ENCODE measurements at regions of chr1 and their contacts with region 1.

Region 1: DNA sequence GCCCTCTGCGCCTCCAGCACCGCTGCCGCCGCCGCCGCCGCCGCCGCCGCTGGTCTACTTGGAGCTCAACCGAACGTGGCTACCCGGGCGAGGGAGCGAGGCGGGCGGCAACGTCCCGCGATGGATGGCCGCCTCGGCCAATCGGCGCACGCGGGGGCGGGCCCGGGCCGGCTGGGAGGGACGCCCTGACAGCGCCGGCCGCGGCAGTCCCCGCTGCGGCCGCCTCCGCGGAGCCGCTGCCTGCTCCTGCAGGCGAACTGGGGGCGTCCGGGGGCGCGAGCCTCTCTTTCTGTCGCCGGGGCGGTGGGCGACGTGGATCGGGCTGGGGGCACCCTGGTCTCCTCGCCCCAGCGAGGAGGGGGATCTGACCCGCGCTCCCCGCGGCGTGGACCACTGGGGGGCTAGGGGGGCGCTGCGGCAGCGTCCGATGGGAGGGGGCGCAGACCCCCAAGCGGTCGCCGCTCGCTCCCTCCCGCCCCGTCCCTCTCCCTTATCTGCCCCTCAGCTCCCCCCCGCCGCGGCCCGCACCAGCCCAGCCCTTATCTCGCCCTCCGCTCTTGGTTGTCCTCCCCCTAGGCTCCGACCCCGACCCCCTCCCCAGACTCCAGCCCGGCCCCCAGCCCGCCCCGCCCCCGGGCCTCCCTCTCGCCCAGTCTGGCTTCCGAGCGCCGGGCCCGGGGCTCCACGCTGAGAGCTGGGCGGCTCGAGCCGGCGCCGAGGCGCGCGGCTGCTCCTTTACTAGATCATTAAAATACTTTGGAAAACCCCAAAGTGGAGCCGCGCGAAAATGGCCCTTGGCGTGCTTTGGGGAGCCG is at the start of gene SSBP3:
- DNase-seq: peak; percentile 79 to 96 (median 92)
- ATAC-seq: peak; percentile 90
- H3K4me3 ChIP-seq: peak within 1 kb of the TSS; percentile 81 to 88
- H3K4me3 Mint-ChIP-seq: peak within 1 kb of the TSS; percentile 96
- H3K27ac ChIP-seq: peak within 1 kb of the TSS; percentile 55 to 76
- H3K27ac Mint-ChIP-seq: peak within 1 kb of the TSS; percentile 91
- H3K4me1 ChIP-seq: peaks cover 57% of the 10 kb centered on the region
- H3K4me1 Mint-ChIP-seq: peaks cover 64% of the 10 kb centered on the region
- H3K27me3 ChIP-seq: no peaks in the 10 kb centered on the region
- H3K27me3 Mint-ChIP-seq: no peaks in the 10 kb centered on the region
- CTCF ChIP-seq: no peak
- total RNA-seq, gene SSBP3: 41.5 to 47.7 TPM

Region 2: GRCh38 chr1:53326088-53326597 is 1080.4 kb before region 1 on chr1:
- CTCF ChIA-PET with region 1: no interaction called
- POLR2A ChIA-PET with region 1: no interaction called
- intact Hi-C with region 1: loop called in 1 of 2 experiments (anchors 5 kb)
- DNase-seq: peak; percentile 78 to 94 (median 92)
- ATAC-seq: peak; percentile 89
- H3K4me3 ChIP-seq: peak overlapping the region; percentile 74 to 82
- H3K4me3 Mint-ChIP-seq: peak overlapping the region; percentile 94
- H3K27ac ChIP-seq: peak overlapping the region; percentile 26 to 66
- H3K27ac Mint-ChIP-seq: peak overlapping the region; percentile 77
- H3K4me1 ChIP-seq: peaks cover 6% of the 10 kb centered on the region
- H3K4me1 Mint-ChIP-seq: peaks cover 16% of the 10 kb centered on the region
- H3K27me3 ChIP-seq: no peaks in the 10 kb centered on the region
- H3K27me3 Mint-ChIP-seq: no peaks in the 10 kb centered on the region
- CTCF ChIP-seq: no peak

Region 3: GRCh38 chr1:53945433-53946251 is 460.9 kb before region 1 on chr1 and contains the start of gene IFT25:
- CTCF ChIA-PET with region 1: no interaction called
- POLR2A ChIA-PET with region 1: no interaction called
- intact Hi-C with region 1: loop called in 1 of 2 experiments (anchors 2 kb)
- DNase-seq: peak; percentile 96 to 100 (median 98)
- ATAC-seq: peak; percentile 81
- H3K4me3 ChIP-seq: peak within 1 kb of the TSS; percentile 81 to 94
- H3K4me3 Mint-ChIP-seq: peak within 1 kb of the TSS; percentile 98
- H3K27ac ChIP-seq: peak within 1 kb of the TSS; percentile 58 to 88
- H3K27ac Mint-ChIP-seq: peak within 1 kb of the TSS; percentile 96
- H3K4me1 ChIP-seq: peaks cover 27% of the 10 kb centered on the region
- H3K4me1 Mint-ChIP-seq: peaks cover 57% of the 10 kb centered on the region
- H3K27me3 ChIP-seq: no peaks in the 10 kb centered on the region
- H3K27me3 Mint-ChIP-seq: no peaks in the 10 kb centered on the region
- CTCF ChIP-seq: no peak
- total RNA-seq, gene IFT25: 12.8 to 13.1 TPM

Region 4: DNA sequence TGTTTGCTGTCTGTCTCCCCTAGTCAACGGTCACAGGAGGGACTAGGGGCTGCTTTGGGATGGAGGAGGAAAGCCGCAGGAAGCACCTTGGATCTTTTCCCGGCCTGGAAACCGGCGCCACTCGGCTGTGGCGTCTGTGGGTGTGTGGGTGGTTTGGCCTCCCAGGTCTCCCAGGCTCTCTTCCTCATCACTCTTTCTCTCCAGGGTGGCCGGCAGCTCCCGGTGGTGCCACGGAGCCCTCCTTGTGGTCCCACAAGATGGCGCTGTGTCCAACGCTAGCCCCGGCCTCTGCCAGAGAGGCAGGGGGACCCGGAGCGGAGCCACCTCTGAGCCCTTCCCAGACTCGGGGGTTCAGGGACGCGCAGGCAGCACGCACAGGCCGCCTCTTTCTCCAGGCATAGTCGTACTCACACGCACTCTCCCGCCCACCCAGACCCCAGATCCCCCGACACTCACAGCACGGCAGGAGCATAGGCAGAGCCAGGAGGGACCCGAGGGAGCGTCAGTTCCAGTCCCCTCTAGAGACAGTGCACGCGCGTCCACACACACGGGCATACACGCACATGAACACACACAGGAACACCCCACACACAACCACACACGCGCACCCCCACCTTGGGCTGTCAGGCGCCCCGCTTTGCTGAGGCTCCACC is 284.9 kb before region 1 on chr1:
- CTCF ChIA-PET with region 1: interaction called, 3 read pairs
- POLR2A ChIA-PET with region 1: interaction called, 3 read pairs
- intact Hi-C with region 1: loop called (anchors 1 to 5 kb)
- DNase-seq: peak; percentile 41 to 81 (median 70)
- ATAC-seq: peak; percentile 94
- H3K4me3 ChIP-seq: no peak overlapping the region
- H3K4me3 Mint-ChIP-seq: peak overlapping the region; percentile 59
- H3K27ac ChIP-seq: no peak overlapping the region
- H3K27ac Mint-ChIP-seq: no peak overlapping the region
- H3K4me1 ChIP-seq: peaks cover 5% of the 10 kb centered on the region
- H3K4me1 Mint-ChIP-seq: peaks cover 6% of the 10 kb centered on the region
- H3K27me3 ChIP-seq: peaks cover 0 to 11% of the 10 kb centered on the region in 2 experiments
- H3K27me3 Mint-ChIP-seq: peaks cover 3% of the 10 kb centered on the region
- CTCF ChIP-seq: peak; percentile 53

Region 5: GRCh38 chr1:54287176-54287650 is 119.3 kb before region 1 on chr1:
- CTCF ChIA-PET with region 1: no interaction called
- POLR2A ChIA-PET with region 1: interaction called, 3 read pairs
- intact Hi-C with region 1: loop called (anchors 2 kb)
- DNase-seq: peak; percentile 12 to 87 (median 71)
- ATAC-seq: peak; percentile 78
- H3K4me3 ChIP-seq: peak overlapping the region in 1 of 2 experiments; percentile 57
- H3K4me3 Mint-ChIP-seq: peak overlapping the region; percentile 78
- H3K27ac ChIP-seq: peak overlapping the region; percentile 61 to 71
- H3K27ac Mint-ChIP-seq: peak overlapping the region; percentile 99
- H3K4me1 ChIP-seq: peaks cover 96% of the 10 kb centered on the region
- H3K4me1 Mint-ChIP-seq: peaks cover 90% of the 10 kb centered on the region
- H3K27me3 ChIP-seq: no peaks in the 10 kb centered on the region
- H3K27me3 Mint-ChIP-seq: no peaks in the 10 kb centered on the region
- CTCF ChIP-seq: no peak

Region 6: DNA sequence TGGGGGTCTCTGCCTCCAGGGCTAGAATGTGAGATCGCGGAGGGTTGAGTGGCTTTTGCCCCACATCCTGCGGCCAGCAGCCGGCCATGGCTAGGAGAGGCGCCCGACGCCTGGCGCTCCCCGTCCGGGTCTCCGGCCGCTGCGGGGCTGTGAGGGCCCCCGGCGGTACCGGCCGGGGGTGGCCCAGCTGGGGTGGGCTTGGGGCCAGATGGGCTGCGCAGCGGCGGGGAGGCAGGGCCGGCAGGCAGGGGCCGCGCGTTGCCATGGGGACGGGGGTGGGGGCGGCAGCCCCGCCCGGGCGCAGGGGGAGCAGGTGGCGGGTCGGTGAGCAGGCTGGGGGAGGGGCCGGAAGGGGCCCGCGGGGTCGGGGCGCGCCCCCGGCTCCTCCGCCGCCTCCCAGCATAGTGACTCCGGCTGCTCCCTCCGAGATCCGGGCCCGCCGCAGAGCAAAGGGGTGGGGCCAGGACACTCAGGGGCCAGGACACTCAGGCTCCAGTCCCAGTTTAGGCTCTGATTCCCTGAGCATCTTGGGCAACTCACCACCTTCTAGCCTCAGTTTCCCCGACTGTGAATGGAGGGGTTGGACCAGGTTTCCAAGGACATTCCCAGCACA is 68.2 kb after region 1 on chr1:
- CTCF ChIA-PET with region 1: interaction called, 4 read pairs
- POLR2A ChIA-PET with region 1: interaction called, 4 read pairs
- intact Hi-C with region 1: loop called in 1 of 2 experiments (anchors 1 kb)
- DNase-seq: peak in 5 of 9 experiments; percentile 42 to 67 (median 57)
- ATAC-seq: peak; percentile 56
- H3K4me3 ChIP-seq: peak overlapping the region; percentile 42 to 46
- H3K4me3 Mint-ChIP-seq: peak overlapping the region; percentile 88
- H3K27ac ChIP-seq: peak overlapping the region in 1 of 2 experiments; percentile 84
- H3K27ac Mint-ChIP-seq: peak overlapping the region; percentile 87
- H3K4me1 ChIP-seq: peaks cover 41% of the 10 kb centered on the region
- H3K4me1 Mint-ChIP-seq: peaks cover 51% of the 10 kb centered on the region
- H3K27me3 ChIP-seq: no peaks in the 10 kb centered on the region
- H3K27me3 Mint-ChIP-seq: no peaks in the 10 kb centered on the region
- CTCF ChIP-seq: no peak

Region 7: DNA sequence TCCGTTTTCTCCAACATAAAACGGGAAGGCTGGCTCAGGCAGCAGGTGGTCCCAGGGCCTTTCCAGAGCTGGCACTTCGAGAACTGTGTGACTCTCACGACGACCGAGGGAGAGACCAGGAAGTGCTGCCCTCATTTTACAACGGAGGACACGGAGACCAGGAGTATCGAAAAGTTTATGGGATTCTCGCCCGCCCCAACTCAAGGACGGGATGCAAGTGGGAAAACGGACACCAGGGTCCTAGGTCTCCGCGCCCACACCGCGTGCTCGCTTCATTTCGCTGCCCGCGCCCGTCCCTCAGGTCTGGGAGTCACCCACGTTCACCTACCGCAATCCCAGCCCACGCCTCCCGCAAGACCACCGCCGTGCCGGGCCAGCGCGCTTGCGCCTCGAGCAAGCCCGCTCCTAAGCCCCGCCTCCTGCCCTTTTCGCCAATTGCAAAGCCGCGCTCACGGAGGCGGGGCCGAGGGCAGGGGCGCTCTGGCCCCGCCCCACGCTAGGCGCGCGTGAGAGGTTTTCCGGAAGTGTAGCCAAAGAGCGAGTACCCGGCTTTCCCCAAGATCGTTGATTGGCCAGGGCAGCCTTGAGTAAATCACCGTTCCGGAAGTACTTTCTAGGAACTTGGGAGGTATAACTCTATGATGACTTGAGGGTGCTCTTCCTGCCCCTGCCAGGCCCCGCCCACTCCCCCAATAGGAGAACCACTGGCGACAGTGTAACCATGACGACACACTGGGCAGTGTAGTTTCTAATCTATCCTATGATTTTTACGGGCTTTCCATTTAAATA is 357.8 kb after region 1 on chr1 and contains the start of gene PARS2:
- CTCF ChIA-PET with region 1: no interaction called
- POLR2A ChIA-PET with region 1: no interaction called
- intact Hi-C with region 1: loop called (anchors 1 kb)
- DNase-seq: peak; percentile 86 to 99 (median 95)
- ATAC-seq: peak; percentile 93
- H3K4me3 ChIP-seq: peak within 1 kb of the TSS; percentile 87 to 97
- H3K4me3 Mint-ChIP-seq: peak within 1 kb of the TSS; percentile 96
- H3K27ac ChIP-seq: peak within 1 kb of the TSS; percentile 62 to 65
- H3K27ac Mint-ChIP-seq: peak within 1 kb of the TSS; percentile 91
- H3K4me1 ChIP-seq: peaks cover 10% of the 10 kb centered on the region
- H3K4me1 Mint-ChIP-seq: peaks cover 20% of the 10 kb centered on the region
- H3K27me3 ChIP-seq: no peaks in the 10 kb centered on the region
- H3K27me3 Mint-ChIP-seq: no peaks in the 10 kb centered on the region
- CTCF ChIP-seq: no peak
- total RNA-seq, gene PARS2: not detected